ENCODE measurements at regions of chr1 and their contacts with region 1.

Region 1: DNA sequence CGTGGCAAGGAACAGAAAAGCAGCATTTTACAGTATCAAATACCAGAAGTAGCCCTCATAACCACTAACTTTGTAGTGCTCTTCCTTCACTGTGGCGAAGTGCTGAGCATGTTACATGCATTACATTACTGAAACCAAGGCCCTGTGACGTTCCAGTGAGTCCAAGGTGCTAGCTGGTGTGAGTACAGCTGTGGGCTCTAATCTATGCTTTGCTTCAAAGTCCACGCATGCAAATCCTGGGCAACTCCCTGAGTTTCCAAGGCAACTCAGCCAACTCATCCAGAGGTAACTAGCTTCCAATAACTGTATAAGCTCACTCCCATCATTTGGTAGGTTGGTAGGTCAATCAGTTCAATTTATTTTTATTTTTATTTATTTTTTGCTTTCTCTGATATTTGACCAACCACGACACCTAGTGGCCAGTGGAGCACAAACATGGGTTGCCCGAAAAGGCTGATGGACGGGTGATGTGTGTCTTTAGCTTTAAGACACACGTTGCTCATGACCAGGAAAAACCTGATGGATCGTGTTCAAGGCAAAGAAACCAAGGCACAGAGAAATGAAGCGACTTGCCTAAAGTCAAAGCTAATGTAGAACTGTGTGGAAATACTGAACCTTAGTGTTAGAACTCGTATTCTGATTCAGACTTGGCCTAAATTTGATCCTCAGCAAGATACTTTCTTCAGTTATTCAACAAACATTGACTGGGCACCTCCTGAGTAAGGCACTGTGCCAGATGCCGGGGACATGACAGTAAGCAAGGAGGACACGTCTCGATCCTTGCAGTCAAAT is 73.0 kb downstream of the GNG12 start:
- DNase-seq: peak; percentile 76
- H3K4me3 Mint-ChIP-seq: no peak overlapping the region
- H3K27ac Mint-ChIP-seq: no peak overlapping the region
- H3K4me1 Mint-ChIP-seq: no peaks in the 10 kb centered on the region
- H3K27me3 Mint-ChIP-seq: peaks cover 19% of the 10 kb centered on the region

Region 2: DNA sequence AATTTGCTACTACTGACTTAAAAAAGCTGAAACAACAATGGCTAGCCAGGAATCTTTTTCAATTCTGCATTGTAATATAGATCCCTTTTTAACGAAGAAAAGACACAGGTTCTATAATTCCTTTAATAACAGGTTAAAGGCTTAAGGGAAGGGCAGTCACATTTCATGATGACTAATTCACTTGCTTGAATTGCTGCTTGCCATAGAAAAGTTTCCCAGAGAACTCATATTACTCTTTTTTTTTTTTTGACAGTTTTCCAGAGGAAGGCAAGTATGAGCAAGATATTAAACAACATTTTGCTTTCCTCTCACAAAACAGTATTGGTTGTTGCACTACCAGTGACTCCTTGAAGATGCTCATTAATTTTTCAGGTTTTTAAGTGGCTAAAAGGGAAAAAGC is 533.0 kb before region 1 on chr1:
- CTCF ChIA-PET with region 1: no interaction called
- intact Hi-C with region 1: loop called (anchors 5 kb)
- DNase-seq: no peak
- H3K4me3 Mint-ChIP-seq: no peak overlapping the region
- H3K27ac Mint-ChIP-seq: no peak overlapping the region
- H3K4me1 Mint-ChIP-seq: peaks cover 28% of the 10 kb centered on the region
- H3K27me3 Mint-ChIP-seq: no peaks in the 10 kb centered on the region

Region 3: GRCh38 chr1:67544921-67545320 is 215.3 kb before region 1 on chr1:
- CTCF ChIA-PET with region 1: interaction called, 82 read pairs
- intact Hi-C with region 1: no loop called
- DNase-seq: no peak
- H3K4me3 Mint-ChIP-seq: no peak overlapping the region
- H3K27ac Mint-ChIP-seq: no peak overlapping the region
- H3K4me1 Mint-ChIP-seq: no peaks in the 10 kb centered on the region
- H3K27me3 Mint-ChIP-seq: no peaks in the 10 kb centered on the region

Region 4: GRCh38 chr1:67561704-67562113 is 198.5 kb before region 1 on chr1:
- CTCF ChIA-PET with region 1: interaction called, 164 read pairs
- intact Hi-C with region 1: loop called (anchors 1 kb)
- DNase-seq: peak; percentile 96
- H3K4me3 Mint-ChIP-seq: no peak overlapping the region
- H3K27ac Mint-ChIP-seq: no peak overlapping the region
- H3K4me1 Mint-ChIP-seq: no peaks in the 10 kb centered on the region
- H3K27me3 Mint-ChIP-seq: no peaks in the 10 kb centered on the region

Region 5: DNA sequence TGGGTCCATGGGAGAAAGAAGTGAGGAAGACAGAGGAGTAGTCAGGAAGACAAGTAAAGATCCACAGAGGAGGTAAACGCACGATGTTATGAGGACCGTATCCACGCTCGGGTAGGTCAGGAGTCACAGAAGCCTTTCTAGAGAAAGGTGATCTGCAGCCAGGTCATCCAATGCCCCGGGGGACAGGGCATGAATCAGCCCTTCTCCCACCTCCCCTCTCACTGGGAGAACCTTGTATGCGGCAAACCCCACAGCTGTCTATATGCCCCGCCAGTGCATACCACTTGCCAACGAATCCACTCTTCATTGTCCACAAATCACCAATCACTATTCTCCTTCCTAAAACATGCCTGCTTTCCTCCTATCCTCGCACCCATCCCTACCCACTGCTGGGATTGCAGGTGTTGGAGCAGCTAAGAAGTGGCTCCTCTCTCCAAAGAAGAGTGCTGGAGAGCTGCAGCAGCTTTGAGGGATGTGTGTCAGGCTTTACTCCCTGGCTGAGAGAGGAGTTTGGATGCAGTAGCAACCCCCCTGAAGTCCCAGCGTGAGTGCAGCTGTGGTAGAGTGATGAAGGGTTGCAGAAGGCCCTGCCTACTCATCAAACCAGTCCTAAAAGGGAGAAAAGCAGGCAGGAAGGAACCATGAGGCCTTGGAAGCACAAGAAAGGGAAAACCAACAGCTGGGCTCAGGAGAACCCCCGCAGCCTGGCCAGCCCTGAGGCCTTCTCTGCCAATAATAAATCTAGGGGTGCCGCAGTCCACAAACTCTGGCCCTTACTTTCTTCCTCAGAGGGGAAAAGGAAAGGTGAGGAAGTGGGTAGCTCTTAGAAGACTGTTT is 177.4 kb before region 1 on chr1:
- CTCF ChIA-PET with region 1: interaction called, 13 read pairs
- intact Hi-C with region 1: no loop called
- DNase-seq: no peak
- H3K4me3 Mint-ChIP-seq: no peak overlapping the region
- H3K27ac Mint-ChIP-seq: no peak overlapping the region
- H3K4me1 Mint-ChIP-seq: no peaks in the 10 kb centered on the region
- H3K27me3 Mint-ChIP-seq: no peaks in the 10 kb centered on the region

Region 6: GRCh38 chr1:67880056-67880601 is 119.9 kb after region 1 on chr1:
- CTCF ChIA-PET with region 1: no interaction called
- intact Hi-C with region 1: no loop called
- DNase-seq: no peak
- H3K4me3 Mint-ChIP-seq: no peak overlapping the region
- H3K27ac Mint-ChIP-seq: no peak overlapping the region
- H3K4me1 Mint-ChIP-seq: no peaks in the 10 kb centered on the region
- H3K27me3 Mint-ChIP-seq: peaks cover 7% of the 10 kb centered on the region

Region 7: GRCh38 chr1:67945733-67946374 is 185.6 kb after region 1 on chr1:
- CTCF ChIA-PET with region 1: no interaction called
- intact Hi-C with region 1: no loop called
- DNase-seq: no peak
- H3K4me3 Mint-ChIP-seq: no peak overlapping the region
- H3K27ac Mint-ChIP-seq: no peak overlapping the region
- H3K4me1 Mint-ChIP-seq: no peaks in the 10 kb centered on the region
- H3K27me3 Mint-ChIP-seq: no peaks in the 10 kb centered on the region

Measured in activated naive CD4-positive, alpha-beta T cell treated with anti-CD3 and anti-CD28 coated beads for 36 hours (primary cell).